ENCODE measurements at regions of chr3 and their contacts with region 1.

Region 1: DNA sequence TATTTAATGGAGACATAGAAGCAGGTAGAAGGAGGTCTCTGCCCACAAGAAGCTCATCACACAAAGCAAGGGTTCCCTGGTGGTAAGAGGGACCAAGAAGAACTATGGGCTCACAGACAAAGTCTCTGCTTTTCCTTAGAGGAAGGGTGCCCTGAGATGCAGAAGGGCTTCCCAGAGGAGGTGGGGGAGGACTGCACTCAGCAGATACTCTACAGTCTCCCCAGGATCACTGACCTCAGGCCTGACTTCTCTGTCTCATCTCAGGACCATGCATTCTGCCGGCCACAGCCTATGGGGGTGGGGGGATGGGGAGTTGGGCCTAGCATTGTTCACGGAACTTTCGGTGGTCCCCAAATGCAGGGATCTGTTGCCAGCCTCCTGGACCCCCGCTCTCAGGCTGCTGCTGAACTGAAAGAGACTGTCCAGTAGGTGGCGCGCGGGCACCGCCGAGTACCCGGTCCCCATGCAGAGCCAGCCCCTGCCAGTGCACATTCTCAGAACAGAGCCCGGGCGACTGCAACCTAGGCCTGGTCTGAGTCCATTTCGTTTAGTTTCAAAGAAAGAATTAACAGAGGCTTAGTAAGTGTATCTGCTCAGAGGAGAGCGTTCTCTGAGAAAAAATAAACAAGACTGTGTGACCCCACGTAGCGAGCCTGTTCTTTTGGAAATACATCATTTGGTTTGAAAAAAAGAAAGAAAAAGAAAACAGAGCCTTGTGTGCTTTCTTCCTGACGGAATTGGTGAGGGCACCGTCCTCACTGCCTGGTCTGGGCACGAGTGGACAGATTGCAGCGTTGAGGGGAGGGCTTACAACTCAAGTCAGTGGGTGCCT is 74.1 kb downstream of the LRTM1 start:
- DNase-seq: peak; percentile 47 to 55
- ATAC-seq: peak; percentile 70 to 75
- H3K4me3 ChIP-seq: no peak overlapping the region
- H3K27ac ChIP-seq: no peak overlapping the region
- H3K4me1 ChIP-seq: peaks cover 5 to 11% of the 10 kb centered on the region in 2 donors
- H3K27me3 ChIP-seq: no peaks in the 10 kb centered on the region
- CTCF ChIP-seq: peak; percentile 78 to 91 (median 87)
- POLR2A ChIP-seq: no peak

Region 2: DNA sequence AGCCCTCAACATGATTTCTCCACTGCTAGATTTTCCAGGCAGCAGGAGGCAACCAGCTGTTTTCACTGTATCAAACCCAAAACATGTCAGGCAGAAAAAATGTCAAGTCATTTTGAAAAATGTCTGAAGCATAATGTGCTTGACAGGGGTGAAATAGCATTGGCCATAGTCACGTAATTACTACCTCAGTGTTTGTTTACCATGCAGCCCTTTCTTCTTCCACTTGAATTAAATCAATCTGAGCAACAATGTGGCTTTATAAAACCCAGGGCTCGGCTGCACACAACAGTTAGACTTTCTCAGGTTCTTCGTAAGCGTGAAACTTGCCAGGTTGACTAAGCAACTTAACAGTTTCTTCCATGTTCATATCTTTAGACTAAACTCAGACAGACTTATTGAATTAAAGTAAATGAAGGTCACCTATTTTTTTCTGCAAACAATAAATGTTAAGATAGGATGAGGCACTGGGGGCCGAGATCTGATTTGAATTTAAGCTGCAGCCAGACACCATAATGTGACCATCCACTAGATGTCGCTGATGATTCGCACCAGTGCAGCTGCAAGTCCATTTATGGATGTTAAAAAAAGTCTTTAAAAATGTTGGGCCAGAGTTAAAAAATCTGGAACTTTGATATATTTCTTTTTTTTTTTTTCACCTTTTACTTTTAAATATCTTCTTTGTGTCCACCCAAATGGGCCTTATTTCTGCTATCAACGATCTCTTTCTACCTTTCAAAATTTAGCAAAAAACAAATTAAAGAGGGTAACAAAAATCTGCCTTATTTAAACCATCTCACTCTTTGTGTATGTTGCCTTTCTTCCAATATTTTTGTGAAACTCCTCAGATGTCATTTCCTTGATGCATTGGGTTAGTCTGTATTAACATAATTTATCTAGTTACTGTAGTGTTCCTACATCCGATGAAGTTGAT is 425.6 kb before region 1 on chr3:
- in situ Hi-C with region 1: no loop called
- intact Hi-C with region 1: loop called (anchors 10 kb)
- DNase-seq: peak; percentile 28 to 31
- ATAC-seq: peak; percentile 59 to 75
- H3K4me3 ChIP-seq: no peak overlapping the region
- H3K27ac ChIP-seq: no peak overlapping the region
- H3K4me1 ChIP-seq: peaks cover 5 to 17% of the 10 kb centered on the region in 2 donors
- H3K27me3 ChIP-seq: no peaks in the 10 kb centered on the region
- CTCF ChIP-seq: peak; percentile 49 to 85 (median 61)
- POLR2A ChIP-seq: no peak

Region 3: DNA sequence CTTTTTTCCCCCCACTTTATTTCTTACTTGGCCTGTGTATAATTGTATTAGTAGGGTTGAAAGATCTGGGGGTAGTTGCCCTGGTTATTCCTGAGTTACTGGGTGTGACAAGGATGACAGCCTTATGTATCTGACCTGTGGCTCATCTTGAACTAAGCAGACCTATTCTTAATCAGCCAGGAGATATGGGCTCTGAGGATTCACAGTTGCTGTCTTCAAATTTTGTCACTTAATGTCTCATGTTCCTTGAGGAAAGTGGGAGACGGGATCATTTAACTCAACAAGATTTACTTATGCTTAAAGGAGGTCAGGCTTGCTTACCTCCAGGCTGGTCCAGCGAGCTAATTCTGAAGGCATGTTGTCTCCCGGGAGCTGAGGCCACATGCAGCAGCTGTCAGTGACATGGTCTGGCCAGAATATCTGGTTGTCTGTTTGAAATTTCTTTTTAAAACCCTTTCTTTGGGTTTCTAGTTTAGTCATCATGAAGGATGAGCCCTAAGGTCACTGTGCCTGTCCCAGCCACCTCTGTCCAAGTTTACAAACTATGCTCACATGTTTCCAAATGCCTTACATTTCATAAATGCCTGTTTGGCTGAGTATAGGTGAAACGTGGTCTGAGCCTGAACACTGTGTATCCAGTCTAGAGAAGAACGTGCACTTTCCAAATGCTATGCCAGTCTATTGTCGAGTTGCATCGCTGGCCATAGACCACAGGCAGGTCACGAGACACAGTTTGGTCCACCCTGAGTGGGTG is 47.2 kb after region 1 on chr3:
- in situ Hi-C with region 1: no loop called
- intact Hi-C with region 1: no loop called
- DNase-seq: peak; percentile 60 to 63
- ATAC-seq: peak; percentile 94 to 96
- H3K4me3 ChIP-seq: no peak overlapping the region
- H3K27ac ChIP-seq: peak overlapping the region; percentile 69 to 84 (median 78)
- H3K4me1 ChIP-seq: peaks cover 45 to 49% of the 10 kb centered on the region in 2 donors
- H3K27me3 ChIP-seq: no peaks in the 10 kb centered on the region
- CTCF ChIP-seq: no peak
- POLR2A ChIP-seq: no peak

Region 4: DNA sequence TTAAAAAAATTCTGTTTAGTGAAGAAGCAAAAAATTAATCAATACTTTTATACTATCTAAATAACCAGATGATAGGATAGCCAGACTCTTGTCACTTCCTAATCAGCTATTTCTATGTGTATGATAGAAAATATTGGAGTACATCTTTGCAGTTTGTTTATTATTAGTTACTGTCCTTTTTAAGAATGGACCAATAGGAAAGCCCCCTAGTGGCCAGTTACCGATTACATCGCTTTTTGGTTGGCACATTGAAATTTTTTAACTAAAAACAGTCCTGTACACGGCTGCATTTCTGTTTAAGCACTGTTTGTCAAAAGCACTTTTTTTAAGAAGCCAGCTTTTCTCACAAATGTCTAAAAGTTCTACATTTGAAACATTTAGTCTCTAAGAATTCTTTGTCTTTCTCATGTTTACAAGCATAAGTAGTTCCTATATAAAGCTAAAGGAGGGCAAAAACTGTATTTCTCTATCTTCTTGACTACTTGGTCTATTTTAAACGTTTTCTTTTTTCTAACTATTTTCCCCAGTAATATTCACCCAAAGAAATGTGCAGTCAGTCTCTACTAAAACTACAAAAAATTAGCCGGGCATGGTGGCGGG is 327.2 kb after region 1 on chr3:
- in situ Hi-C with region 1: loop called in 2 of 4 experiments (anchors 10 to 25 kb)
- intact Hi-C with region 1: loop called (anchors 2 kb)
- DNase-seq: no peak
- ATAC-seq: no peak
- H3K4me3 ChIP-seq: no peak overlapping the region
- H3K27ac ChIP-seq: no peak overlapping the region
- H3K4me1 ChIP-seq: no peaks in the 10 kb centered on the region
- H3K27me3 ChIP-seq: no peaks in the 10 kb centered on the region
- CTCF ChIP-seq: peak; percentile 41 to 77 (median 58)
- POLR2A ChIP-seq: no peak

Region 5: DNA sequence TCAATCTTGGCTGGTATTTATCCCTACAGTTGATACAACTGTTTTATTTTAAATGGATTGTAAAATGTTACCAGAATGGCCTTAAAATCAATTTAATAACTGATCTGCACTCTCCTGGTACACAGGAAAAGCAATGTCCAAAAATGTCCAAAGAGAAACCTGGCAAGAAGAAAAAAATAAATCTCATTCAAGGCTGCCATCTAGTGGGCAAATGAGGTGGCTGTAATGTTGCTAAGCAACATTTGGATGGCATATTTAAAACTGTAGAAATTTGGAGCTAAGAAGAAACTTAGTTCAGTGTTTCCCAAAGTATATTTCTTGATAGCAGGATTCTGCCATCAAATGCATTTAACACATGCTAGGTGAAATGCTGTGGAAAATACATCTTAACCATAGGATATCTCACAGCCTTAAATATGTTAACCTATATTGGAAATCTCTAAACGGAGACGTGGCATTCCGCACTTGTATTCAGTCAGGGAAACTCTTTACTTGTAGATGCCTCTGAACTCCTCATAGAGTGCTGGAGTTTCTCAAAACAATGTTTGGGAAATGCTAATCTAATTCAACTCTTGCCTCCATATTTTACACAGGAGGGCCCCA is 1397.7 kb after region 1 on chr3:
- in situ Hi-C with region 1: loop called in 3 of 4 experiments (anchors 10 to 25 kb)
- intact Hi-C with region 1: loop called (anchors 5 kb)
- DNase-seq: peak in 1 of 2 donors; percentile 12
- ATAC-seq: peak in 1 of 2 donors; percentile 46
- H3K4me3 ChIP-seq: no peak overlapping the region
- H3K27ac ChIP-seq: no peak overlapping the region
- H3K4me1 ChIP-seq: no peaks in the 10 kb centered on the region
- H3K27me3 ChIP-seq: no peaks in the 10 kb centered on the region
- CTCF ChIP-seq: peak; percentile 8 to 75 (median 60)
- POLR2A ChIP-seq: no peak